ENCODE measurements at regions of chr12 and their contacts with region 1.

Region 1: GRCh38 chr12:130335517-130336392 is 1.9 kb upstream of the PIWIL1 start:
- DNase-seq: peak in 1 of 5 donors; percentile 24
- ATAC-seq: peak in 1 of 4 donors; percentile 45
- H3K4me3 ChIP-seq: no peak overlapping the region
- H3K27ac ChIP-seq: no peak overlapping the region
- H3K4me1 ChIP-seq: peaks cover 0 to 8% (median 0%) of the 10 kb centered on the region in 12 donors
- H3K27me3 ChIP-seq: peaks cover 4 to 43% (median 18%) of the 10 kb centered on the region in 9 donors
- CTCF ChIP-seq: peak; percentile 56 to 82 (median 68)
- POLR2A ChIP-seq: no peak

Region 2: DNA sequence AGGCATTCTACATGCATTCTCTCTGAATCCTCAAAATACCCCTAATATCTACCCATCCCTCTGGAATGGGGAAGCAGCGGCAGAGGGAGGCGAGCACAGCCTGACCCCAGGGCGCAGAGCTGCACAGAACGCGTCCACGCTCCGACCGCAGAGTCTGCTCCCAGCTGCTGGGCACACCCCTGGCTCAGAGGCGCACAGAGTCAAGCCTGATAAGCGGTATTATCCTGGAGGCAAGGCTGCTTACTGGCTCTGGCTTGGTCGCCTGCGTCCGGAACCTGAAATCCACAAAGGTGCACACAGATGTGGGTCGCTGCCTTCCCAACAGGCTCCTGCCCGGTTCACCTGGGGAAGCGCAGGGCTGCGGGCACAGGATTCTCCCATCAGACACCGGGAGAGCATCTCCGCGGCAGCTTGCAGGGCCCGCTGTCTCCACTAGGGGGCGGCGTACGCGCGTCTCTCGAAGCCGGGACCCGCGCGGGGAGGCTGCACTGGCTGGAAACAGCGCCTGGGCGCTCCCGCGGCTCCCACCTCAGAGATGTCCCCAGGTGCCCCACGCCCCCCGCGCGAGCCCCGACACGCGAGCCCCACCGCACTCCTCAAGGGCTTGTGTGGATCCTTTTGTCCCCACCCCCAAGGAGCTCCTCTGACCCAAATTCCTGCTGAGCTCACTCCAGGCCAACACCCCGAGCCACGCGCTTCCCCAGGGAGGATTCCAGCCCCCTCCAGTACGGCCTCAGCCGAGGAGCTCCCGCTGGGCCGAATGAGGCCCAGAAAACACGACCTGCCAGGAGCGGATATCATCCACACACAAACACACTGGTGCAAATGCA is 293.6 kb before region 1 on chr12:
- intact Hi-C with region 1: loop called in 7 of 10 experiments (anchors 1 to 5 kb)
- DNase-seq: peak in 1 of 5 donors; percentile 29
- ATAC-seq: no peak
- H3K4me3 ChIP-seq: no peak overlapping the region
- H3K27ac ChIP-seq: no peak overlapping the region
- H3K4me1 ChIP-seq: no peaks in the 10 kb centered on the region
- H3K27me3 ChIP-seq: peaks cover 19 to 90% (median 41%) of the 10 kb centered on the region in 9 donors
- CTCF ChIP-seq: peak; percentile 49 to 79 (median 68)
- POLR2A ChIP-seq: no peak

Region 3: DNA sequence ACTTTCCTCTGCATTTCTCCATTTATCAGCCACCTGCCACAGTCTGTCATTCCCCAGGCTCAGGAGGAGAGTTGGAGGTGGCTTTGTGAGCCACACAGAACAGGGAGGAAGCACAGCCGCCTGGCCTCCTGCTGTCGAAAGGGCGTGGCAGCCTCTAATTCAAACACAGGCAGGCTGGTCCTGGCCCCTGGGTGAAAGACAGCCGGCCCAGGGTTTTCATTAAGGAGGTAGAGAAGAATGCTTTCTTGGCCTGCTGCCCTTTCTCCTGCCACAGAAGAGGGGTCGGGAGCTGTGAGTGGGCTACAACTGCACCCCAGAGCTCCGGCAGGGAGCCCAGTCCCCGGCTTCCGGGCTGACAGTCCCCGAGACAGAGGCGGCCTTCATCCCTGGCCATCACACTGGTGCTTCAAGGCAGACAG is 282.1 kb before region 1 on chr12:
- intact Hi-C with region 1: loop called in 4 of 10 experiments (anchors 2 to 5 kb)
- DNase-seq: no peak
- ATAC-seq: no peak
- H3K4me3 ChIP-seq: no peak overlapping the region
- H3K27ac ChIP-seq: no peak overlapping the region
- H3K4me1 ChIP-seq: no peaks in the 10 kb centered on the region
- H3K27me3 ChIP-seq: peaks cover 0 to 38% (median 7%) of the 10 kb centered on the region in 9 donors
- CTCF ChIP-seq: no peak
- POLR2A ChIP-seq: no peak

Region 4: DNA sequence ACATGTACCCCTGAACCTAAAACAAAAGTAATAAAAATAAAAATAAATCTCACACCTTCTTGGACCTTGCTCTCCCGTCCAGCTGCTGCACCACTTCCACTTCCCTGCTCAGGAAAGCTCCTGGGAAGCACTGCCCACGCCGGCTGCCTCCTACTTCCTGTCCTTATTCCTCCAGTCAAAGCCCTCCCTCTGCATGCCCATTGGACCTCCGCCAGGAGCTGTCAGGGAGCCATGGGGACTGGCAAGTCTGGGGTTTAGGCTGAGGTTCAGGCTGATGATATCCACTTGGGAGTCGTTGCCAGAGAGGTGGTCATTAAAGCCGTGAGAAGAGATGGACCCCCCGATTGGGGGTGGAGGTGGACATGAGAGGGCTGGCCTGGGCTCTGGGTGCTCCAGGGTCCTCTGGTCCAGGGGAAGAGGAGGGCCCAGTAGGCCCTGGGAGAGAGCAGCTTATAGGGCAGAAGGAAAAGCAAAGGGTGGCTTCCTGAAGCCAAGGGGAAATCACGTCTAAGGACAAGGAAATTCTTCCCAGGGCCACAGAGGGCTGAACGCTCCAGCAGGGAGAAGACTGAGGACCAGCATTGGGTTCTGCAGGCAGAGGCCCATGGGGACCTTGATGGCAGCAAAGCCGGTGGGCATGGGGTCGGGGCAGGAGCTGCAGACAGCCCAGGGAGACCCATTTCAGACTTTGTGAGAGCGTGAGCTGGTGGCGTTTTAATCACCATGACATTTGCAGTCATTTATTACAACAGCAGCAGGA is 94.7 kb before region 1 on chr12:
- intact Hi-C with region 1: no loop called
- DNase-seq: no peak
- ATAC-seq: no peak
- H3K4me3 ChIP-seq: no peak overlapping the region
- H3K27ac ChIP-seq: no peak overlapping the region
- H3K4me1 ChIP-seq: no peaks in the 10 kb centered on the region
- H3K27me3 ChIP-seq: peaks cover 0 to 6% (median 0%) of the 10 kb centered on the region in 9 donors
- CTCF ChIP-seq: no peak
- POLR2A ChIP-seq: no peak

Region 5: DNA sequence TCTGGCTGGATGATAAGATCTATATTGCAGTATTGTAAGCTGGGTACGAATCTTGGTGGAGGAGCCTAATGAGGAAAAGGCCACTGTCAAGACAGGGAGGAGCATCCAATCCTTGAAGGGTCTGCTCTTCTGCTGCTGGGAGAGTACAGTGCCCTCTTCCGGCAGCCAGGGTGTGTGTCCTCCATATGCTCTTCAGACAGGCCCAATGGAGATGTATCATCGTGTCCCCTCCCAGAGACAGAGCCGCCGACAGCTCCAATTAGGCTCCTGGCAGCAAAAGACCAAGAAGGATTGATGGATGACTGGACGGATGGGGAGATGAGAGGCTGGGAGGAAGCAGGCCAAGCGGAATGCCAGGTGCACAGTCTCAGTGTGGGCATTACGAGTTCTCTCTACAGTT is 49.7 kb before region 1 on chr12:
- intact Hi-C with region 1: loop called in 1 of 10 experiments (anchors 5 kb)
- DNase-seq: no peak
- ATAC-seq: no peak
- H3K4me3 ChIP-seq: no peak overlapping the region
- H3K27ac ChIP-seq: no peak overlapping the region
- H3K4me1 ChIP-seq: no peaks in the 10 kb centered on the region
- H3K27me3 ChIP-seq: peaks cover 0 to 5% (median 0%) of the 10 kb centered on the region in 9 donors
- CTCF ChIP-seq: no peak
- POLR2A ChIP-seq: no peak

Measured in heart left ventricle (tissue), 16 donors.